ENCODE measurements at regions of chr5 and their contacts with region 1.

Region 1: DNA sequence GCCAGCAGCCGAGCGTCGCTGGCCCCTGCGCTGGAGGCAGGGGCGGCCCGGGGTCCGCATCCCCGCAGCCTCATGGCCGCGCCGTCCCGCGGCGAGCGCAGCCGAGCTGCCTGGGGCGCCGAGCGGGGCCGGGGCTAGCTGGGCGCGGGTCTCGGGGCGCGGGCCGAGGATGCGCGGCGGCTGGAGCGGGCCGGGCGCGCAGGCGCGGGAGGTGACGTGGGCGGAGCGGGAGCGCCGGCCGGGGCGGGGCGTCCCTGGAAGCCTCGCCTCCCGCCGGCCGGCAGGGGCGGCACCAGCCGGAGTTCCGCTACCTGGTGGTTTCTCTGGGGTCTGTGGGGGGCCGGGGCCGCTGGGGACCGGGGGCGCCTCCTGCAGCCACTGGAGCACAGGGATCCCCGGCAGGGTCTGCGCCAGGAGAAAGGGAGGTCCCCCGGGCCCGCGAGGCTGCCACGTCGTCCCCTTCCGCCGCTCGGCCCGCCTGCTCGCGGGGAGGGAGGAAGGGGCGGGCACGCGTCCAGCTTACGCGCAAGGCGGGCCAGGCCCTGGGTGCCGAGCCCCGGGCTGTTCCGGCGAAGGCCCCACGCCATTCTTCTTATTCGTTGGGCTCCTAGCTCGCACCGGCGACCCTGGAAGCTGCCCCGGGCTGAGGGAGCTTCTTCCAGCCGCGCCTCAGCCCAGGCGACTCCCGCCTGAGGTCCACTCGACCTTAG is at the start of gene LPCAT1:
- DNase-seq: peak; percentile 70
- H3K4me3 ChIP-seq: peak within 1 kb of the TSS; percentile 72 to 92 (median 76)
- H3K27ac ChIP-seq: peak within 1 kb of the TSS; percentile 59
- H3K4me1 ChIP-seq: peaks cover 16% of the 10 kb centered on the region
- H3K27me3 ChIP-seq: no peaks in the 10 kb centered on the region
- CTCF ChIP-seq: no peak
- POLR2A ChIP-seq: no peak
- total RNA-seq, gene LPCAT1: 49.2 and 57.2 TPM in 2 replicates

Region 2: GRCh38 chr5:188488-189481 is 1335.1 kb before region 1 on chr5:
- CTCF ChIA-PET with region 1: no interaction called
- POLR2A ChIA-PET with region 1: no interaction called
- dilution Hi-C with region 1: no loop called
- intact Hi-C with region 1: no loop called
- DNase-seq: peak; percentile 76
- H3K4me3 ChIP-seq: no peak overlapping the region
- H3K27ac ChIP-seq: no peak overlapping the region
- H3K4me1 ChIP-seq: no peaks in the 10 kb centered on the region
- H3K27me3 ChIP-seq: peaks cover 5 to 8% of the 10 kb centered on the region in 2 experiments
- CTCF ChIP-seq: peak; percentile 92 to 99
- POLR2A ChIP-seq: no peak

Region 3: GRCh38 chr5:1564182-1564748 is 40.3 kb after region 1 on chr5:
- CTCF ChIA-PET with region 1: no interaction called
- POLR2A ChIA-PET with region 1: no interaction called
- dilution Hi-C with region 1: no loop called
- intact Hi-C with region 1: loop called (anchors 2 kb)
- DNase-seq: peak; percentile 70
- H3K4me3 ChIP-seq: no peak overlapping the region
- H3K27ac ChIP-seq: peak overlapping the region; percentile 37
- H3K4me1 ChIP-seq: peaks cover 22% of the 10 kb centered on the region
- H3K27me3 ChIP-seq: no peaks in the 10 kb centered on the region
- CTCF ChIP-seq: no peak
- POLR2A ChIP-seq: no peak

Region 4: GRCh38 chr5:1594357-1595106 is 70.6 kb after region 1 on chr5:
- CTCF ChIA-PET with region 1: no interaction called
- POLR2A ChIA-PET with region 1: no interaction called
- dilution Hi-C with region 1: no loop called
- intact Hi-C with region 1: loop called (anchors 2 kb)
- DNase-seq: peak; percentile 75
- H3K4me3 ChIP-seq: peak overlapping the region; percentile 53 to 75 (median 53)
- H3K27ac ChIP-seq: no peak overlapping the region
- H3K4me1 ChIP-seq: no peaks in the 10 kb centered on the region
- H3K27me3 ChIP-seq: no peaks in the 10 kb centered on the region
- CTCF ChIP-seq: peak; percentile 31 to 46
- POLR2A ChIP-seq: peak; percentile 64

Measured in endothelial cell of umbilical vein (primary cell).